ENCODE measurements at regions of chr2 and their contacts with region 1.

Region 1: DNA sequence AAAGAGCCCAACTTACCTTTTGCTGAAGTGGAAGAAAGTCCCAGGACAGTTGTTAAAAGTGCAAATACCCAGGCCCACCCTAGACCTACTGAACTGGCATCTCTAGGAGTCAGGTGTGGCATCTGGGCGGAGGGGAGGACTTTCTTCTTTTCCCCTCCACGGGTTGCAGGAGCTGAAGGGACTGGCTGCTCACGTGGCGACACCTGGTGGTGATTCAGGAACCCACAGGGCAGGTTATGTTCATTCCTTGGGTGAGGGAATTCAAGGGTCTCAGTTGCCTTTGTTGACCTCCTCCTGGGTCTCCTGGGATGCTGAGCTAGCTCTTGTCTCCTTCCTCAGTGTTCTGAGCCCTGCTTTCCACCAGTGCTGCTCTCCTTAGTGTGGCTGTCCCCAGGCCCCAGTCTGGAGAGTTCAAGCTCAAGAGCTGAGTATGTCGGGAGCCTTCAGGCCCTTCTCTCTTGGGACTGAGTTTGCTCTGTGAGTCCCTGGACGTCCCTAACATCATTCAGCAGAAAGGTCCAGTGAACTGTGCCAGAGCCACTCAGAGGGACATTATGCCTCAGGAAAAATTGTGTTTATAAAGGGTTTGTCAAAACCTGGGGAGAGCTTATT is 56.9 kb downstream of the DYSF start:
- DNase-seq: peak; percentile 73
- ATAC-seq: peak; percentile 54
- H3K4me3 ChIP-seq: no peak overlapping the region
- H3K4me3 Mint-ChIP-seq: no peak overlapping the region
- H3K27ac ChIP-seq: no peak overlapping the region
- H3K27ac Mint-ChIP-seq: no peak overlapping the region
- H3K4me1 ChIP-seq: no peaks in the 10 kb centered on the region
- H3K4me1 Mint-ChIP-seq: peaks cover 2% of the 10 kb centered on the region
- H3K27me3 ChIP-seq: no peaks in the 10 kb centered on the region
- H3K27me3 Mint-ChIP-seq: peaks cover 11% of the 10 kb centered on the region
- CTCF ChIP-seq: peak; percentile 86

Region 2: GRCh38 chr2:69893684-69894551 is 1616.4 kb before region 1 on chr2 and contains the start of gene SNRNP27:
- CTCF ChIA-PET with region 1: no interaction called
- POLR2A ChIA-PET with region 1: no interaction called
- intact Hi-C with region 1: no loop called
- DNase-seq: peak; percentile 85
- ATAC-seq: peak; percentile 88
- H3K4me3 ChIP-seq: peak within 1 kb of the TSS; percentile 67 to 96 (median 84)
- H3K4me3 Mint-ChIP-seq: peak within 1 kb of the TSS; percentile 98
- H3K27ac ChIP-seq: peak within 1 kb of the TSS; percentile 57 to 88
- H3K27ac Mint-ChIP-seq: peak within 1 kb of the TSS; percentile 95
- H3K4me1 ChIP-seq: peaks cover 9 to 16% of the 10 kb centered on the region in 2 donors
- H3K4me1 Mint-ChIP-seq: peaks cover 33% of the 10 kb centered on the region
- H3K27me3 ChIP-seq: no peaks in the 10 kb centered on the region
- H3K27me3 Mint-ChIP-seq: no peaks in the 10 kb centered on the region
- CTCF ChIP-seq: no peak
- total RNA-seq, gene SNRNP27: 52.0 and 54.8 TPM in 2 replicates

Region 3: GRCh38 chr2:71306762-71307161 is 203.5 kb before region 1 on chr2:
- CTCF ChIA-PET with region 1: interaction called, 350 read pairs
- POLR2A ChIA-PET with region 1: no interaction called
- intact Hi-C with region 1: no loop called
- DNase-seq: no peak
- ATAC-seq: no peak
- H3K4me3 ChIP-seq: no peak overlapping the region
- H3K4me3 Mint-ChIP-seq: no peak overlapping the region
- H3K27ac ChIP-seq: no peak overlapping the region
- H3K27ac Mint-ChIP-seq: no peak overlapping the region
- H3K4me1 ChIP-seq: no peaks in the 10 kb centered on the region
- H3K4me1 Mint-ChIP-seq: no peaks in the 10 kb centered on the region
- H3K27me3 ChIP-seq: no peaks in the 10 kb centered on the region
- H3K27me3 Mint-ChIP-seq: no peaks in the 10 kb centered on the region
- CTCF ChIP-seq: no peak